Gastrocnemius medialis (tissue), 4 donors: ENCODE measurements at regions of chr9 and their contacts with region 1.

Region 1: GRCh38 chr9:20622330-20623020 is at the start of gene MLLT3:
- DNase-seq: peak; percentile 90 to 95
- ATAC-seq: peak; percentile 78
- H3K4me3 ChIP-seq: peak within 1 kb of the TSS; percentile 91 to 99 (median 96)
- H3K27ac ChIP-seq: peak within 1 kb of the TSS; percentile 85 to 98 (median 92)
- H3K4me1 ChIP-seq: peaks cover 12 to 14% of the 10 kb centered on the region in 2 donors
- H3K27me3 ChIP-seq: no peaks in the 10 kb centered on the region
- CTCF ChIP-seq: peak in 1 of 5 experiments; percentile 23
- POLR2A ChIP-seq: peak; percentile 57 to 79
- total RNA-seq, gene MLLT3: 4.0 to 6.4 (median 4.5) TPM

Region 2: DNA sequence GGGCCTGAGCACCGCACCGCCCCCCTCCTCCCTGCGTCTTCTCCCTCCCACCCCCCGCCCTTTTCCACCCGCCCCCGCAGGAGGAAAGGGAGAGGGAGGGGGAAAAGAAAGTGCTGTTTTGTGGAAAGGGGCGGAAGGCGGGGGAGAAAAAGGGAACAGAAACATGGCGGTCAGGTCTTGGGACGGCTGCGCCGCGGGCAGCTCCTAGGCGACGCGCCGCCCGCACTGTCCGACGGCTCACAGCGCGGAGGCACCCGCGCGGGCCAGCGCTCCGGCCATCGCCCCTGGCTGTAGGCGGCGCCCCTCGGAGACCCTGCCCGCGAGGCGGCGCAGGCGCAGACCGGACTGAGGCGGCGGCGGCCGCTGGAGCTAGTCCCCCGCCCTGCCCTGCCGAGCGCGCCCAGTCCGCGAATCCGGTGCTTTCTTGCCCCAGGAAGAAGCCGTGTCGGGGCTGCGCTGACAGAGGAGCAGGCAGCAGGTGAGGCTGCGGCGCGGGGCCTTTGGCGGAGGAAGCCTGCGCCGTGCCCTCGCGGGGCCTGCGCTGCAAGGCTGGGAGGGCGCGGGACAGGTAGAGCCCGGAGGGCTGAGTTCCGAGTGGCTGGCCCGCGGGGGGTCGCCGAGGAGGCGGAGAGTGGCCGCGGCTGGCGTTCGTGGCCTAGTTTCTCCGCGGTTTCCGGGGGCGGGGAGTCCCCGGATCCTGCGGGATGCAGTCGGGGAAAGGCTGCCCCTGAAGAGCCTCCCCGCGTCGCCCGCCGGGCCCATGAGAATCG is 1391.9 kb before region 1 on chr9 and contains the start of gene DENND4C:
- in situ Hi-C with region 1: no loop called
- intact Hi-C with region 1: loop called (anchors 5 kb)
- DNase-seq: peak; percentile 69 to 75
- ATAC-seq: peak; percentile 86 to 91
- H3K4me3 ChIP-seq: peak within 1 kb of the TSS; percentile 88 to 100 (median 94)
- H3K27ac ChIP-seq: peak within 1 kb of the TSS; percentile 94 to 99 (median 96)
- H3K4me1 ChIP-seq: peaks cover 21 to 24% of the 10 kb centered on the region in 2 donors
- H3K27me3 ChIP-seq: no peaks in the 10 kb centered on the region
- CTCF ChIP-seq: peak in 1 of 5 experiments; percentile 17
- POLR2A ChIP-seq: peak; percentile 70 to 80
- total RNA-seq, gene DENND4C: 19.2 to 34.0 (median 21.3) TPM

Region 3: DNA sequence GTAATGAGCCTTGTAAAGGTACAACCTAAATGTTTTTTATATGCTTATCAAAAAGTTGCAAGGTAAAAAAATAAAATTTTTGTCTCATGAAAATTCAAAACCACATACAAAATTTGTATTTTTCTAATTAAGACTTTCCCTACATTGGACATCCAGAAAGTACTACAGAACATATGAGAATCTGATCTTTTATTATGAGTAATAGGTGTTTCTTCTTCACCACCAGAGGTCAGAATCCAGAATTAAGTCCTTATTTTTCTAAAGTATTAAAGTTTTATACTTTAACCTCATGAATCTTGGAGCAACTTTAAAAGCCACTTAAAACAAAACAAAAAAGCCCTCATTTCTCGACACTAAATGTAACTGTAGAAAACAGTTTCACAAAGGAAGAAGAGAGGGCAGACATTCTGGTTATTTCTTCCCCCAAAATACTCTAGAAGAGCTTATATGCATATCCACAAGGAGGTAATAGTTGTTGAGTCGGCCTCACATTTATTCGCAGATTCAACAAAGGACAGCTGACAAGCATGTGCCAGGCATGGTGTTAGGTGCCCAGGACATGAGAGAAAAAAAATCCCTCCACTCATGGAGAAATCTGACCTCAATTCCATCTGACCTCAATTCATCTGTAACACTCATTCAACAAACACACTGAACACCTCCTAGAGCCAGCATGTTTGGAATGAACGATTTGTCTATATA is 69.5 kb before region 1 on chr9:
- in situ Hi-C with region 1: no loop called
- intact Hi-C with region 1: loop called (anchors 2 kb)
- DNase-seq: peak in 1 of 2 donors; percentile 4
- ATAC-seq: peak; percentile 84 to 94
- H3K4me3 ChIP-seq: no peak overlapping the region
- H3K27ac ChIP-seq: no peak overlapping the region
- H3K4me1 ChIP-seq: peaks cover 14 to 26% of the 10 kb centered on the region in 2 donors
- H3K27me3 ChIP-seq: no peaks in the 10 kb centered on the region
- CTCF ChIP-seq: peak in 3 of 5 experiments; percentile 12 to 28 (median 13)
- POLR2A ChIP-seq: no peak

Region 4: GRCh38 chr9:20684035-20684872 is 61.8 kb after region 1 on chr9 and contains the start of gene FOCAD:
- in situ Hi-C with region 1: loop called in 1 of 4 experiments (anchors 10 kb)
- intact Hi-C with region 1: loop called (anchors 1 kb)
- DNase-seq: peak; percentile 92 to 96
- ATAC-seq: peak; percentile 90 to 94
- H3K4me3 ChIP-seq: peak within 1 kb of the TSS; percentile 71 to 82 (median 77)
- H3K27ac ChIP-seq: peak within 1 kb of the TSS; percentile 89 to 98 (median 96)
- H3K4me1 ChIP-seq: peaks cover 16 to 31% of the 10 kb centered on the region in 2 donors
- H3K27me3 ChIP-seq: no peaks in the 10 kb centered on the region
- CTCF ChIP-seq: peak in 1 of 5 experiments; percentile 14
- POLR2A ChIP-seq: peak; percentile 95 to 99
- total RNA-seq, gene FOCAD: 19.5 to 36.0 (median 28.6) TPM

Region 5: GRCh38 chr9:20698782-20699181 is 76.3 kb after region 1 on chr9:
- in situ Hi-C with region 1: loop called in 2 of 4 experiments (anchors 5 to 10 kb)
- intact Hi-C with region 1: no loop called
- DNase-seq: no peak
- ATAC-seq: no peak
- H3K4me3 ChIP-seq: no peak overlapping the region
- H3K27ac ChIP-seq: no peak overlapping the region
- H3K4me1 ChIP-seq: peaks cover 12 to 20% of the 10 kb centered on the region in 2 donors
- H3K27me3 ChIP-seq: no peaks in the 10 kb centered on the region
- CTCF ChIP-seq: no peak
- POLR2A ChIP-seq: no peak